AG04450 (cell line): ENCODE measurements at regions of chr10 and their contacts with region 1.

Region 1: GRCh38 chr10:72048450-72049124 is 39.8 kb downstream of the SPOCK2 start:
- DNase-seq: peak; percentile 83
- H3K4me3 ChIP-seq: no peak overlapping the region
- H3K27ac ChIP-seq: no peak overlapping the region
- H3K27me3 ChIP-seq: peaks cover 4% of the 10 kb centered on the region
- CTCF ChIP-seq: peak; percentile 100

Region 2: DNA sequence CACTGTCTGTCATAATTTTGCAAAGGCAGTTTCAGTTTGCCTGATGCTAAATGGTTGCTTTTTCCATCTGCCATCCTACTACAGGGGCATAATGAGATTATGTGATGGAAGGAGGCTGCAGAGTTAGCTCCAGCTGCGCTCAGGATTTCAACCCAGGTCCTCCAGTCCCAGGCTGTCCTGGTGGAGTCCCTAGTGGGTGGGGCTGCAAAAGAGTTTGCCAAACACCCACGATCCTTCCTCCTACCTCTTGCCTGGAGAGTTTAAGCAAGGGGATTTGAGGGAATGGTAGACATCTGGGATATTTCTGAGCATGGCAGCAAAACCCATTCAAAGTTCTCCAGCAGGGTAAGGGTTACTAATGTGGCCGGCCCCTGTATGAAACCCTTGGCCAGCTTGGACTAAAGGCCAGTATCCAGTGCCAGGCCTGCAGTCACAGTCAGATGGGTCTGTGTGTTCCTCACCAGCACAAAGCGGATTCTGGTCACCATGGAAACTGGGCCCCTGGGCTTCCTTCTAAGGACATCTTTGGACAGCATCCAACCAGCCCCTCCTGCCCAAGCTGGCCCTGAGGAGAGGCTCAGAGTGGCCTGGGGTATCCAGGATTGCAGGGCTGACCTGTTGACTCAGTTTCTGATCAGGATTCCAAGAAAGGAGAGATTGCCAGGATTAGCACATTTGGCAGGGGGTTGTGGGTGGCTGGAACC is 127.1 kb before region 1 on chr10:
- CTCF ChIA-PET with region 1: interaction called, 11 read pairs
- POLR2A ChIA-PET with region 1: no interaction called
- DNase-seq: no peak
- H3K4me3 ChIP-seq: no peak overlapping the region
- H3K27ac ChIP-seq: no peak overlapping the region
- H3K27me3 ChIP-seq: peaks cover 8% of the 10 kb centered on the region
- CTCF ChIP-seq: no peak

Region 3: DNA sequence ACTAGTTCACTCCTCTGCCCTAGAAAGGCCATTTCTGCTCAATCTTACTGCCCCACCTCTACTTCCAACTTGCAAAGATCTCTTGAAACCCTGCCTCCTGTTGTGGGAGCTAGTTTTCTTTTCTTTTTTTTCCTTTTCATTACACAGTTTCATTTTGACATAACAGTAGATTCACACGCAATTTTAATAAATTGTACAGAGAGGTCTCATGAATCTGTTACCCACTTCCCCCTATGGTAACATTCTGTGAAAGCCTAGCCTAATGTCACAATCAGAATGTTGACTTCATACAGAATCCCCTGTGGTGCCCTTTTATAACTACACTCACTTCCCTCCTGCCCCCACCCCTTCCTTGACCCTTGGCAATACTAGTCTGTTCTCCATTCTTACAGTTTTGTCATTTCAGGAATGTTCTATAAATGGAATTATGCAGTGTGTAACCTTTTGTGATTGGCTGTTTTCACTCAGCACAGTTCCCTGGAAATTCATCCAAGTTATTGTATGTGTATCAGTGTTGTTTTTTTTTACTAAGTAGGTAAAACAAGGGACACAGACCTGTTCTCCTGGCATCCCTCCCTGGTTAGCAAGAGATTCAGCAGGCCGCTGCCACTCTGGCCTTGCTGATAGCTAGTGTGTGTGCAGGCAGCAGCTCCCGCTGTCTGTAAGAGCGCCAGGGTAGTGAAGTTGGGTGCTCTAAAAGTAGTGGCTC is 62.9 kb before region 1 on chr10:
- CTCF ChIA-PET with region 1: interaction called, 12 read pairs
- POLR2A ChIA-PET with region 1: no interaction called
- DNase-seq: no peak
- H3K4me3 ChIP-seq: no peak overlapping the region
- H3K27ac ChIP-seq: peak overlapping the region; percentile 65
- H3K27me3 ChIP-seq: no peaks in the 10 kb centered on the region
- CTCF ChIP-seq: 0 out of 2 replicates have a peak, but pooled peaks have one; percentile 7

Region 4: GRCh38 chr10:72024596-72024995 is 24.0 kb before region 1 on chr10:
- CTCF ChIA-PET with region 1: interaction called, 20 read pairs
- POLR2A ChIA-PET with region 1: no interaction called
- DNase-seq: no peak
- H3K4me3 ChIP-seq: no peak overlapping the region
- H3K27ac ChIP-seq: no peak overlapping the region
- H3K27me3 ChIP-seq: peaks cover 8% of the 10 kb centered on the region
- CTCF ChIP-seq: no peak

Region 5: DNA sequence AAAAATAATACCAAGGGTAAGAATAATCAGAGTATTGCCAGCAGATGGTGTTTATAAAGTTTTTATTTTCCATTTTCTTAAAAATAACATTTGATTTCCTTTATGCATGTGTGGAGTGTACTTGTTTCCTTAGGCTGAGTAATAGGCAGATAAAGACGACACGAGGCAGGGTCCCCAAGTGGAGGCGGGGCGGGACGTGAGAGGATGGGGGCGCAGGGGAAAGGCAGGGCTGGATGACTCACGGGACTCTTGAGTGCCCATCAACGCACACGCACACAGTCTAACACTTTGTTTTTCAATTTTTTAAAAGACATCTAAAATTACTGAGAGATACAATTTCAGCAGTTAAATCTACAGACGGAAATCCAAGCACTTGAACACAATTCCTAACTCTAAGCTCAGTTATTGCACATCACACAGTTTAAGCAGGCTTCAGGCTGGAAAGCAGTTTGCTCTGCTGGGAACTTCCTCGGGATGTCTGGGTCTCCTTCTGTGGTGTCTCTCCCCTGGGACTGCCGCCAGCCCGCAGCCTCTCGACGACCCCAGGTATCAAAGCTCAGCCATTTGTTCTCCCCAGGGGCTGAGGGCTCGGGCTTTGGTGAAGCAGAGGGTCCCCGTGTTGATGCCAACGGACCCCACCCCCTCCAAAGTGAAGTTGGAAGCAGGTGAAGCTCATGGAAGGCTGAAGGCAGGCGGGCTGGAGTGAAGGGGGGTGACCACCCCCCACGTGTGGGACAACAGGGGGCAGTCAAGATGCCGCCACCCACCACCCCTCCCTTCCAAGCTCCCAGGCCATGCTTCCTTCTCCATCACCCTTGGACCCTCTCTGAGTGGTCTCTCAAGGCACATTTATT is 10.6 kb after region 1 on chr10:
- CTCF ChIA-PET with region 1: interaction called, 32 read pairs
- POLR2A ChIA-PET with region 1: no interaction called
- DNase-seq: no peak
- H3K4me3 ChIP-seq: no peak overlapping the region
- H3K27ac ChIP-seq: no peak overlapping the region
- H3K27me3 ChIP-seq: peaks cover 28% of the 10 kb centered on the region
- CTCF ChIP-seq: no peak

Region 6: DNA sequence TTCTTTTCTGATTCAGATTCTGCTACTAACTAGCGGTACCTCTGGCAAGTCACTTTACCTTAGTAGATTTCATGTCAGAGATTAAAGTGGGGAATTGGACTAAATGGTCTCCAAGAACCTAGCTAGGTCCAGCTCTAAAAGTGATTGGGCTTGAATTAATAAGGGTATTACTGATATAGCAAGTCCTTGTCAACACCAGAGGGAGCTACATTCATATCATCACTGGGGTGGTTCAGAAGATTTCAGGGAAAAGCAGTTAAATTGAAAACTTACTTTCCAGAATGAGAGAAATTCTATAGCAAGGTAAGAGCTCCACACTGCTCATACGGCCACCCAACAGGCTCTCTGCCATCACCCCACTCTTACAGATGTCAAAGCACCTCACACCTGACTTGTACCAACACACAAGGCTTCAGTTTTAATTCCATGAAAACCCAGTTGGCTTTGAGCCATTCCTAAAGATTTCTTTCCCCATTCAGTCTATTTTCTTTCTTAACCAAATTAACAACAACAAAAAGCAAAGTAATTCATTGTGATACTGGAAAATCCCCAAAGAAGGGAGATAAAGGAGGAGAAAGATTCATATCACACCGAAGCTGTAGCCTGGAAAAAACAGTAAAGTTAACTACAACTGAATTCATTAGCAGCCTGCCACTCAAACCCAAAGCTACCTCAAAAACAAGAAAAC is 77.7 kb after region 1 on chr10:
- CTCF ChIA-PET with region 1: interaction called, 14 read pairs
- POLR2A ChIA-PET with region 1: no interaction called
- DNase-seq: peak; percentile 10
- H3K4me3 ChIP-seq: no peak overlapping the region
- H3K27ac ChIP-seq: no peak overlapping the region
- H3K27me3 ChIP-seq: no peaks in the 10 kb centered on the region
- CTCF ChIP-seq: peak; percentile 59

Region 7: GRCh38 chr10:72164617-72165016 is 116.0 kb after region 1 on chr10:
- CTCF ChIA-PET with region 1: no interaction called
- POLR2A ChIA-PET with region 1: no interaction called
- DNase-seq: no peak
- H3K4me3 ChIP-seq: no peak overlapping the region
- H3K27ac ChIP-seq: no peak overlapping the region
- H3K27me3 ChIP-seq: no peaks in the 10 kb centered on the region
- CTCF ChIP-seq: peak; percentile 10; the same call in 1 of the 2 replicates

Region 8: DNA sequence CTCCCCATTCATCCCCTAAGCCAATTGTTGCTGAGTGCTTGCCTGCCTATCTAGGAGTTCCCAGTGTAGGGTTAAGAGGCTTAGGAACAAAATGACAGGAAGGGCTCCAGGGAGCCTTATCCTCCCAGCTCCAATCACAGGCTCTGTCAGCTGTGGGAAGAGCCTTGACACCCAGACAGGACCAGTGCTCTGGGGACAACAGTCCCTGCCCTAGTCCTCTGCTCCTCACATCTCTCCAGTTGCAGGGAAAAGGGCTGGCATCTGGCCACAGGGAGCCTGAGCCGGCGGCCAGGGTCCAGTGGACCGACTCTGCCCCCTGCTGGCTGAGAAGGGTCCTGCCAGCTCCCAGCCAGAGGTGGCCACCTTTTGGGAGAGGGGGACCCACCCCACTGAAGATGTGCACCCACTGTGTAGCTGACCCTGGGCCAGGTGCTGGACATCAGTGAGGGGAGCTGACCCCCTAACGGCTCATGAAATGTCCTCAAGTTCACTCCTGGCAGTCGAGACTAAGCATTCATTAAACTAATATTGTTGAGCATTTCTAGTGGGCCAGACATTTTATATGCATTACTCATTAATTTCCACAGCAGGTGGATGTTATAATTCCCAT is 288.5 kb after region 1 on chr10:
- CTCF ChIA-PET with region 1: interaction called, 30 read pairs
- POLR2A ChIA-PET with region 1: no interaction called
- DNase-seq: no peak
- H3K4me3 ChIP-seq: no peak overlapping the region
- H3K27ac ChIP-seq: no peak overlapping the region
- H3K27me3 ChIP-seq: no peaks in the 10 kb centered on the region
- CTCF ChIP-seq: peak; percentile 94